H1 (cell line): ENCODE measurements at regions of chr19 and their contacts with region 1.

Region 1: DNA sequence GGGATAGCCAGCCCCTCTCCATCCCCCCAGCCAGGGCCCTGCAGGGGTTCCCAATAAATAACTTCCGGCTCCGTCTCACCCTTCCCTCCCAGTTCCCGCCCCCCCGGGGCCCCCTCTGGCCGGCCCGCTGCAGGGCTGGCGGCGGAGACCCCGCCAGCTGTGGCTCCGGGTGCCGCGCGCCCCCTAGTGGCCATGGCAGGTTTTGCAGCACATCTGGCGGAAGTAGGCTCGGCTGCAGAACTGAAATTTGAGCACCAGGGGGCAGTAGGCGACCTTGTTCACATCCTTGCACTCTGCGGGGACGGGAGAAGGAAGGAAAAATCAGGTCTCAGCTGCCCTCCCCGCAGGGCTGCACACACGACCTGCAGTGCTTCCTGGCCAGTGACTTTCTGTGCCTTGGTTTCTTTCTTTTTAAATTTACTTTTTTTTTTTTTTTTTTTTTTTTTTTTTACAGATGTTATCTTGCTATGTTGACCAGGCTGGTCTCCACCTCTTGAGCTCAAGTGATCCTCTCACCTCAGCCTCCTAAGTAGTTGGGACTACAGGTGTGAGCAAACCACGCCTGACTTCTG is 3.6 kb upstream of the MYO1F start:
- DNase-seq: peak; percentile 57 to 99
- H3K4me3 ChIP-seq: peak overlapping the region in 1 of 4 experiments; percentile 48; a peak in 2 of 8 replicates
- H3K27ac ChIP-seq: no peak overlapping the region
- H3K4me1 ChIP-seq: peaks cover 0 to 7% (median 1%) of the 10 kb centered on the region in 4 experiments; a peak in 3 of 7 replicates
- H3K27me3 ChIP-seq: no peaks in the 10 kb centered on the region
- CTCF ChIP-seq: peak; percentile 99 to 100 (median 100)
- EP300 ChIP-seq: peak in 1 of 2 experiments; percentile 77; a peak in 2 of 3 replicates
- POLR2A ChIP-seq: no peak
- RAD21 ChIP-seq: peak; percentile 90 to 91

Region 2: GRCh38 chr19:8494158-8494557 is 86.6 kb before region 1 on chr19:
- CTCF ChIA-PET with region 1: interaction called, 11 read pairs
- POLR2A ChIA-PET with region 1: no interaction called
- DNase-seq: no peak
- H3K4me3 ChIP-seq: no peak overlapping the region
- H3K27ac ChIP-seq: no peak overlapping the region
- H3K4me1 ChIP-seq: peaks cover 0 to 2% (median under 1%) of the 10 kb centered on the region in 4 experiments; a peak in 2 of 7 replicates
- H3K27me3 ChIP-seq: no peaks in the 10 kb centered on the region
- CTCF ChIP-seq: no peak
- EP300 ChIP-seq: no peak
- POLR2A ChIP-seq: no peak
- RAD21 ChIP-seq: no peak

Region 3: DNA sequence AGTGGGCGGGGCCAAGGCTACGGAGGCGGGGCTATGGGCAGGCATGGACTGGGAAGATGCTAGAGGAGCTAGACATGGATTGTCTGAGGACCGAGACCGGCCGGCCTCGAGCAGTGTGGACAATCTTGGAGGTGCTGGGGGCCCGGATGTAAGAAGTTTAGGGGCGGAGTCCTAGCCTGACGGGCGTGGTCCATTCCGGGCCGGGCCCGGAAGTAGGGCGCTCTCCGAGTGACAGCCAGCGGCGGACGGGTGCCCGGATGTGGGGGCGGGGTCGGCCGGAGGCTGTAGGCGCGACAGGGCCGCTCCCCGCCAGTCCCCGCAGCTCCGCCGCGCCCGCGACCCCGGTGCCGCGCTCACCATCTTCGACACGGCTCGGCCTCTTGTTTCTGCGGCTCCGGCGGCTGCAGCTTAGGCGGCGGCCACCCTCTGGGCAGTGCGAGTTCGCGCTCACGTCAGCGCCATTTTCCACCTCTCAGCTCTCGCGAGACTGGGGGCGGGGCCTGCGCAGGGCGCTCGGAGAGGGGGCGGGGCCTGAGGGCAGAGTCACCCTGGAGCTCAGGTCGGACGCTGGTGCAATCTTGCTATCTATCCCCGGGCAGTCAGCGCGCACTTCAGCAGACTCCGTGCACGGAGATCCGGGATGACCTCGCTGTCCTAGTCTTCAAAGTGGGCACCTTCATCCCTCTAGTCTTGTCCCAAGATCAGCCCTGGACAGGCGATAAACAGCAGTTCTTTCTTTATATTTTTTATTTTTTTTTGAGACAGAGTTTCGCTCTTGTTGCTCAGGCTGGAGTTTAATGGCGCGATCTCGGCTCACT is 66.9 kb before region 1 on chr19 and contains the start of gene ZNF414:
- CTCF ChIA-PET with region 1: interaction called, 14 read pairs
- POLR2A ChIA-PET with region 1: interaction called, 8 read pairs
- DNase-seq: peak; percentile 96 to 99
- H3K4me3 ChIP-seq: peak within 1 kb of the TSS; percentile 61 to 86 (median 76)
- H3K27ac ChIP-seq: peak within 1 kb of the TSS; percentile 89; the same call in 1 of the 2 replicates
- H3K4me1 ChIP-seq: peaks cover 0 to 14% (median 8%) of the 10 kb centered on the region in 4 experiments; a peak in 6 of 7 replicates
- H3K27me3 ChIP-seq: no peaks in the 10 kb centered on the region
- CTCF ChIP-seq: no peak
- EP300 ChIP-seq: no peak
- POLR2A ChIP-seq: peak; percentile 93 to 96
- RAD21 ChIP-seq: no peak
- total RNA-seq, gene ZNF414: 23.6 and 26.8 TPM in 2 replicates

Region 4: GRCh38 chr19:8552810-8553209 is 28.0 kb before region 1 on chr19:
- CTCF ChIA-PET with region 1: interaction called, 30 read pairs
- POLR2A ChIA-PET with region 1: interaction called, 4 read pairs
- DNase-seq: peak; percentile 10 to 55
- H3K4me3 ChIP-seq: no peak overlapping the region
- H3K27ac ChIP-seq: no peak overlapping the region
- H3K4me1 ChIP-seq: no peaks in the 10 kb centered on the region; a peak in 2 of 7 replicates
- H3K27me3 ChIP-seq: no peaks in the 10 kb centered on the region
- CTCF ChIP-seq: no peak
- EP300 ChIP-seq: 0 out of 3 replicates have a peak, but pooled peaks of 1 of the 2 experiments have one; percentile 24
- POLR2A ChIP-seq: no peak
- RAD21 ChIP-seq: no peak

Region 5: GRCh38 chr19:8569066-8569771 is 11.6 kb before region 1 on chr19:
- CTCF ChIA-PET with region 1: interaction called, 83 read pairs
- POLR2A ChIA-PET with region 1: interaction called, 3 read pairs
- DNase-seq: no peak
- H3K4me3 ChIP-seq: no peak overlapping the region
- H3K27ac ChIP-seq: no peak overlapping the region
- H3K4me1 ChIP-seq: no peaks in the 10 kb centered on the region; a peak in 1 of 7 replicates
- H3K27me3 ChIP-seq: no peaks in the 10 kb centered on the region
- CTCF ChIP-seq: no peak
- EP300 ChIP-seq: no peak
- POLR2A ChIP-seq: no peak
- RAD21 ChIP-seq: no peak

Region 6: GRCh38 chr19:8641908-8642547 is 61.2 kb after region 1 on chr19:
- CTCF ChIA-PET with region 1: interaction called, 11 read pairs
- POLR2A ChIA-PET with region 1: no interaction called
- DNase-seq: no peak
- H3K4me3 ChIP-seq: no peak overlapping the region
- H3K27ac ChIP-seq: no peak overlapping the region
- H3K4me1 ChIP-seq: no peaks in the 10 kb centered on the region
- H3K27me3 ChIP-seq: peaks cover 0 to 13% (median 8%) of the 10 kb centered on the region in 4 experiments; a peak in 3 of 7 replicates
- CTCF ChIP-seq: peak in 2 of 3 experiments; percentile 59 to 65; a peak in 3 of 4 replicates
- EP300 ChIP-seq: no peak
- POLR2A ChIP-seq: no peak
- RAD21 ChIP-seq: peak; percentile 59 to 66